HEK293 (cell line): ENCODE measurements at regions of chr5 and their contacts with region 1.

Region 1: GRCh38 chr5:59390074-59390659 is 503.4 kb downstream of the PDE4D start:
- H3K4me3 ChIP-seq: no peak overlapping the region
- H3K27ac ChIP-seq: no peak overlapping the region
- H3K4me1 ChIP-seq: no peaks in the 10 kb centered on the region
- CTCF ChIP-seq: no peak; the same call in 1 of the 2 replicates

Region 2: GRCh38 chr5:59496524-59497134 is 106.5 kb after region 1 on chr5:
- CTCF ChIA-PET with region 1: interaction called, 26 read pairs
- POLR2A ChIA-PET with region 1: no interaction called
- H3K4me3 ChIP-seq: no peak overlapping the region
- H3K27ac ChIP-seq: no peak overlapping the region
- H3K4me1 ChIP-seq: no peaks in the 10 kb centered on the region
- CTCF ChIP-seq: no peak

Region 3: GRCh38 chr5:59506285-59506877 is 116.2 kb after region 1 on chr5:
- CTCF ChIA-PET with region 1: interaction called, 12 read pairs
- POLR2A ChIA-PET with region 1: no interaction called
- H3K4me3 ChIP-seq: no peak overlapping the region
- H3K27ac ChIP-seq: no peak overlapping the region
- H3K4me1 ChIP-seq: no peaks in the 10 kb centered on the region
- CTCF ChIP-seq: 0 out of 2 replicates have a peak, but pooled peaks have one; percentile 23

Region 4: DNA sequence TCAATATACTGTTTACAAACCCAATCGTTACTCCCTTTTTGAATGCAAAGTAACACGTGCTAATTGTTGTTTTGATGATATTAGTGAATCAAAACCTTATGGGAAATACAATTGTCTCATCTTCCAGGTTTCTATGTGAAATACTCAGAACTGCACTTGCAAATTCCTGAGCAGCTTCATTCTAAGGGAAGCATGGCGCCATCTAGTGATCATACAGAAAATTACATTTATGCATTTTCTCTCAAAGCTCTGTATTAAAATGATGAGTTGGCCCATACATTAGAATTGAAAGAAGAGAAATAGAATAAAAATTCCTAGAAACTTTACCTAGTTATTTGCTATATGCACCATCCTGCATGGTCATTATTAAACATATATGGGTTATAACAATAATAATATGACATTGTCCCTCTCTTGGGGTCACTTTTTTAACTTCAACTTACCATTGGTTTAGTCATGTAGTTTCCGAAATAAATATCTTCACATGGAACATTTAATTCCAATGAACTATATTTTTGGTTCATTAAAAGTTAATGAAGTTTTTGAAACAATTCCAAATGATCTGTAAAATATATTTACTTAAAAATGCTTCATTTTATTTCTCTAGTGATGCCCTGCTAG is 283.4 kb after region 1 on chr5:
- CTCF ChIA-PET with region 1: interaction called, 68 read pairs
- POLR2A ChIA-PET with region 1: no interaction called
- H3K4me3 ChIP-seq: no peak overlapping the region
- H3K27ac ChIP-seq: no peak overlapping the region
- H3K4me1 ChIP-seq: no peaks in the 10 kb centered on the region; the same call in 1 of the 2 replicates
- CTCF ChIP-seq: peak; percentile 19; the same call in 1 of the 2 replicates

Region 5: DNA sequence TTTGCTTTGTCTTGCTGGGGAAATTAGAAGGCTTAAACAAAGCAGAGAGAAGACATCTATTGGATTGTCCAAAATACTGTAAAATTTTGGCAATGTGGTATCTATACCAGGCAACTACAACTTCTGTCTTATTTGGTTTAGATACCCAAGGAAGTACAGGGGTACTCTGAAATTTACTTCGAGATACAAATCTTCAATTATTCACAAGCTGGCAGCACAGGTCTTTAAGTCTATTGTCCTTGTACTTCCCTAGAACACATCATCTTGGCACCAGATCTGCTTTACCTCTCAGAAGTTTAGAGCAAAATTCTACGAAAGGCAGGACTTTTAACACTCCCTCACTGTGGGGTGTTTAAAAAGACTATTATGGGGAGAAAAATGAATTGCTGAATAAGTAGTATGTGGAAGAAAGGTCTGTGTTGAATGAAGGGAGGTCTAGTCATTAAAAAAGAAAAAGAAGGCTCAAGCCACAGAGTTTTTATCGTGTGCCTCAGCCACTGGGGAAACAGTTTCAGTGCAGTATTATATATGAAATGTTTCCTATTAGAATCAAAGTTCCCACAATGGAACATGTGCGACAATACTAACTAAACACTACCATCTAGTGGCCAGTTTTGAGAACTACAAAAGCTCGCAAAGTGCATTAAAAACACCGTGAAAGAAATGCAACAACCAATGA is 409.6 kb after region 1 on chr5:
- CTCF ChIA-PET with region 1: interaction called, 21 read pairs
- POLR2A ChIA-PET with region 1: no interaction called
- H3K4me3 ChIP-seq: no peak overlapping the region
- H3K27ac ChIP-seq: no peak overlapping the region
- H3K4me1 ChIP-seq: peaks cover 15% of the 10 kb centered on the region
- CTCF ChIP-seq: peak; percentile 68